ENCODE measurements at regions of chr11 and their contacts with region 1.

Region 1: DNA sequence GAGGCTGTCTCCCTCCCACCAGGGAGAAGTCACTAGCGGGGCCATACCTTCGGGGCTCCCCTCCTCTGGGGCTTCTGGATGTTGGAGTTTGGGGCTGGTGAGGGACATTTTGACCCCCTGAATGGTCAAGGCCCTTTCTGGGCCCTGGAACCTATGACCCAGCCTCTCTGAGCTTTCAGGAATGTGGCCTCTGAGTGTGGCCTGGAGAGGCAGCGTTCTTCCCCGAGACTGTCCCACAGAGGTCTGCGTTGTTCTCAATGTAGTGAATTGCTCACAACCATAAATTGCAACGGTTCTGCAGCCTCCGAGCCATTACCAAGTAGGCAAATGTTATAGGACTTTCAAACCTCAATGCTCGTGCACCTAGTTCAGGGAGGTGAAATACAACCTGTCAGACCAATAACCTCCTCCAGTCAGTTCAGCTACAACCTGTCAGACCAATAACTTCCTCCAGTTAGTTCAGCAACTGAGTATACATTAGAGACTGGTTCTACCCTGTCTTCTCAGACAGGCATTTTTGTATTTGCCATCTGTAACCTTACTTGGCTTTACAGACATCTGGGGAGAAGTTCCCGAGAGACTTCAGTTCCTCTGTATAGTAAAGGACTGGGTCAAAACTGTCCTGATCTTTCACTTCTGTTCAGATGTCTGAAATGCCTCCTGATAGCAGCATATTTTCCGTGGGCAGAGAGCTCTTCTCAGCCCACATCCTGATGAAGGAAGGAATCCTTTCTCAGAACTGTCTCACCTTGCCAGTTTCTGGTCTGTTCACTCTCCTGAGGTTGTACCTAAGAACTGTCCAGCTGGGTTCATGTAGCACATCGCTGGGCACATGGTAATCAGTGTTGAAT is 34.2 kb downstream of the MICAL2 start:
- DNase-seq: no peak
- H3K4me3 Mint-ChIP-seq: peak overlapping the region; percentile 14
- H3K27ac Mint-ChIP-seq: peak overlapping the region; percentile 82
- H3K4me1 Mint-ChIP-seq: peaks cover 87% of the 10 kb centered on the region
- H3K27me3 Mint-ChIP-seq: no peaks in the 10 kb centered on the region

Region 2: DNA sequence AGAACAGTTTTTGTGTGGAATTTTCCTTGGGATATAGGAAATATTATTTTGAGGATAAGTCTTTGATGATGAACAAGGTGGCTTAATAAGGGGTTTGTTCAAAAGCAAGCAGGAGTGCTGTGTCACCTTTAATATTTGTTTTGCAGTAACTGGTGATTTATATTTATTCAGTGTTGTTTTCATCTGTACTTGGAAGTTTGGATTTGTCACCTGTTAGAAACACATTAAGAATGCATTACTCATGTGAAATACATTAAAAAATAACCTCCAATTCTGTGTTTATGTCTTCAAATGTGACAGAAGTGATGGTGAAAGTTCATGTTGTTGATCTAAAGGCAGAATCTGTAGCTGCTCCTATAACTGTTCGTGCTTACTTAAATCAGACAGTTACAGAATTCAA is 206.6 kb before region 1 on chr11:
- intact Hi-C with region 1: no loop called
- DNase-seq: no peak
- H3K4me3 Mint-ChIP-seq: no peak overlapping the region
- H3K27ac Mint-ChIP-seq: no peak overlapping the region
- H3K4me1 Mint-ChIP-seq: no peaks in the 10 kb centered on the region
- H3K27me3 Mint-ChIP-seq: no peaks in the 10 kb centered on the region

Region 3: GRCh38 chr11:12066799-12067508 is 77.6 kb before region 1 on chr11:
- intact Hi-C with region 1: no loop called
- DNase-seq: no peak
- H3K4me3 Mint-ChIP-seq: no peak overlapping the region
- H3K27ac Mint-ChIP-seq: no peak overlapping the region
- H3K4me1 Mint-ChIP-seq: peaks cover 12% of the 10 kb centered on the region
- H3K27me3 Mint-ChIP-seq: peaks cover 3% of the 10 kb centered on the region

Region 4: DNA sequence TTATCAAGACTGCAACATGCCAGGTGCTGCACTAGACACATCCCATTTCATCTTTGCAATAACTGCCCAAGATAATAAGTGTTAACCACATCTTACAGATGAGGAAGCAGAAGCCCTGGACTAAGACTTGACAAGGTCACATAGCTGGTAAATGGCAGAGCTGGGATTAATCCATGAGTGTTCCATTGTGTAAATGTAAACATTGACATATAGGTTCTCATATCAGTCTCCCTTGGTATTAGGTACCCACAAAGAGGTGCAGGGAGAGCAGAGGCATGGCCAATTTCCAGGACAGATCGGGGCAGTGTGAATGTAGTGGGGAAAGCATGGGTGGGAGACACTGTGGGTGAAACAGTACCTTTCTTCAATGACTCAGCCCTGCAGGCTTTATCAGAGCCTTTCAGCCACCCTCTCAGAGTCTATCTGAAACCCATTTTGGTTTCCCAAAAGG is 16.2 kb before region 1 on chr11:
- intact Hi-C with region 1: loop called (anchors 2 kb)
- DNase-seq: no peak
- H3K4me3 Mint-ChIP-seq: no peak overlapping the region
- H3K27ac Mint-ChIP-seq: peak overlapping the region; percentile 73
- H3K4me1 Mint-ChIP-seq: peaks cover 71% of the 10 kb centered on the region
- H3K27me3 Mint-ChIP-seq: no peaks in the 10 kb centered on the region

Region 5: DNA sequence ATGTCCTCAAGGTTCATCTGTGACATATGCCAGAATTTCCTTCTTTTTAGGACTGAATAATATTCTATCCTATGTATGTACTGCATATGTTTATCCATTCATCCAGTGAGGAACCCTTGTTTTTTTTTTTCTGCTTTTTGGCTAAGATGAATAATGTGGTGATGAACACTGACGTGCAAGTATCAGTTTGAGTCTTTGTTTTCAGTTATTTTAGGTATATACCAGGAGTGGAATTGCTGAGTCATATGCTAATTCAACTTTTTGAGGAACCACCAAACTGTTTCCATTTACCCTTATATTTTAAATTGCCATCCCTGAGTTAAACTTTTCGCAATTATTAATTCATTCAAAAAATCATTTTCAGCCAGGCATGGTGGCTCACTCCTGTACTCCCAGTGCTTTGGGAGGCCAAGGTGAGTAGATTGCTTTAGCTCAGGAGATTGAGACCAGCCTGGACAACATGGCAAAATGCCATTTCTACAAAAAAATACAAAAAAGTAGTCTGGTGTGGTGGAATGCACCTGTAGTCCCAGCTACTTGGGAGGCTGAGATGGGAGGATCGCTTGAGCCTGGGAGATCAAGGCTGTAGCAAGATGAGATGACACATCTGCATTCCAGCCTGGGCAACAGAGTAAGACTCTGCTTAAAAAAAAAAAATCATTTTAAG is 30.1 kb after region 1 on chr11:
- intact Hi-C with region 1: no loop called
- DNase-seq: no peak
- H3K4me3 Mint-ChIP-seq: peak overlapping the region; percentile 73
- H3K27ac Mint-ChIP-seq: peak overlapping the region; percentile 98
- H3K4me1 Mint-ChIP-seq: peaks cover 73% of the 10 kb centered on the region
- H3K27me3 Mint-ChIP-seq: no peaks in the 10 kb centered on the region